HCT116 (cell line): ENCODE measurements at regions of chr9 and their contacts with region 1.

Region 1: DNA sequence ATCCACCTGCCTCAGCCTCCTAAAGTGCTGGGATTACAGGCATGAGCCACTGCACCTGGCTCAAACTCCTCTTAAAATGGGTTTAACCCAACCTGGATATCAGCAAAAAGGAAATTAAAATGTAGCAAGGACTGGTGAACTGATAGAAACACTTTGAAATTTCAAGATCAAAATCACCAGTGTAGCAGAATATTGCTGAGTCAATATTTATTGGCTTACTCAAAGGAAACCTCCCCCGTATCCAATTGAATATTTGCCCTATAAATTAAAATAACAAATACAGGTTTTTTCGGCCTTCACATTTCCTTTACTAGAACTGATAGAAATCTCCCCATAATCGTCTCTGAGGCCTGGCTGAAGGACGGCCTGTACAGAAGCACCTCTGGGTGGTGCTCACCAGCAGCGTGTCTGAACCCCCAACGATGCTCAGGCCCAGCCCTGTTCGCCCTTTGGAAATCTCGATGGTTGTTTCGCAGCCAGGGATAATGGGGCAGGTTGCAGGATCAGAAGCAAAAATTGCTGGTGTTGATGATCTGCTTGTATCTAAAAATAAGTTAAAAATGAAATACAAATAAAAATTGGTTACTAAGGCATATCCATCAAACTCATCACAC is 156.6 kb downstream of the MPDZ start:
- DNase-seq: no peak
- ATAC-seq: no peak
- H3K4me3 ChIP-seq: no peak overlapping the region
- H3K27ac ChIP-seq: no peak overlapping the region
- H3K4me1 ChIP-seq: no peaks in the 10 kb centered on the region
- H3K27me3 ChIP-seq: no peaks in the 10 kb centered on the region
- CTCF ChIP-seq: no peak
- POLR2A ChIP-seq: no peak
- RAD21 ChIP-seq: no peak

Region 2: GRCh38 chr9:12775679-12776512 is 347.0 kb before region 1 on chr9:
- CTCF ChIA-PET with region 1: no interaction called
- POLR2A ChIA-PET with region 1: no interaction called
- RAD21 ChIA-PET with region 1: no interaction called
- intact Hi-C with region 1: no loop called
- DNase-seq: peak; percentile 57
- ATAC-seq: peak; percentile 90
- H3K4me3 ChIP-seq: peak overlapping the region; percentile 75 to 82
- H3K27ac ChIP-seq: peak overlapping the region; percentile 66
- H3K4me1 ChIP-seq: peaks cover 0 to 22% of the 10 kb centered on the region in 2 experiments; a peak in 2 of 4 replicates
- H3K27me3 ChIP-seq: no peaks in the 10 kb centered on the region
- CTCF ChIP-seq: peak; percentile 23 to 45 (median 28); a peak in 4 of 6 replicates
- POLR2A ChIP-seq: no peak
- RAD21 ChIP-seq: peak; percentile 56

Region 3: DNA sequence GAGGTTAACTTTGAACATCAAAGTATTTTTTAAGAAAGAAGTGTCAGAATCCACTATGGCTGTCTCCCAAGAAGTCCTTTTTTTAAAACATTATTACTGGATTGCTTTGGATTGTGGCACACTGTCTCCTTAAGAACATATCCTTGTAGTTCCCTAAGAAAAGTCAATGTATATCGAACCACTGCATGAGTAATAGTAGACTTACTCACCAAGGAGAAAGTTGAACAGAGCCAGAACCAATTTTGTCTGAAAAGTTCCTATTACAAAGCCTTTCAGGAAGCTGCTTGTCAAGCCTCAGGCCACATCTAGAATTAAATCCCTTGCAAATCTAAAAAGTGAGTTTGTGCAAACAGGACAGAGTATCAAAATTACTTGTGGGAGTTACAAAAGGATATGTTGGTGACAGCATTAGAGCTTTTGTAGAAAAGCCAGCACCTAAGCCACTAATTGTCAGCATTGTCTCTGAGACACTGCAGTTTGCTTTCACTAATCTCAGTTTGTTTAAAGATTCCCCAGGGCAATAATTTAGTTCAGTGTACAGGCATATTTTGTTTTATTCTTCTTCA is 38.8 kb before region 1 on chr9:
- CTCF ChIA-PET with region 1: no interaction called
- POLR2A ChIA-PET with region 1: no interaction called
- RAD21 ChIA-PET with region 1: no interaction called
- intact Hi-C with region 1: no loop called
- DNase-seq: no peak
- ATAC-seq: no peak
- H3K4me3 ChIP-seq: no peak overlapping the region
- H3K27ac ChIP-seq: no peak overlapping the region
- H3K4me1 ChIP-seq: no peaks in the 10 kb centered on the region
- H3K27me3 ChIP-seq: no peaks in the 10 kb centered on the region
- CTCF ChIP-seq: no peak
- POLR2A ChIP-seq: no peak
- RAD21 ChIP-seq: no peak

Region 4: DNA sequence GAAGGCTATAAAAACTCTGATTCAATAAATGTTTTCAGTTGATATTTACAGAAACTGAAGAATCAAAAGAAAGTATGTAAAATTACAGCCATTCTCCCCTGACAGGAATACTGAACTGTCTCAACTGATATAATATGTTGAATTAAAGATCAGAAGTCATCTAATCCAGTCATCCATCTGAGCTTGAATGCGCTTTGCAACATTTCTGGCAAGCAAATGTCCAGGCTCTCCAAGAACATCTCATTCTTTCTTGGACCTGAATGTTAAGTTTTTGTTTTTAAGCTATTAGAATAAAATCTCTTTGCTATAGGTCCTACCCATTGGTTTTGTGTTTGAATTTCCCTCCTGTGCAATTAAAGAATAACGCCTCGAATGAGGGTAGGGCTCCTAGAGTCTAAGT is 36.1 kb after region 1 on chr9:
- CTCF ChIA-PET with region 1: no interaction called
- POLR2A ChIA-PET with region 1: no interaction called
- RAD21 ChIA-PET with region 1: no interaction called
- intact Hi-C with region 1: loop called (anchors 5 kb)
- DNase-seq: no peak
- ATAC-seq: no peak
- H3K4me3 ChIP-seq: no peak overlapping the region
- H3K27ac ChIP-seq: no peak overlapping the region
- H3K4me1 ChIP-seq: no peaks in the 10 kb centered on the region
- H3K27me3 ChIP-seq: no peaks in the 10 kb centered on the region
- CTCF ChIP-seq: no peak
- POLR2A ChIP-seq: no peak
- RAD21 ChIP-seq: no peak

Region 5: GRCh38 chr9:13171261-13171660 is 48.4 kb after region 1 on chr9:
- CTCF ChIA-PET with region 1: no interaction called
- POLR2A ChIA-PET with region 1: no interaction called
- RAD21 ChIA-PET with region 1: no interaction called
- intact Hi-C with region 1: loop called (anchors 5 kb)
- DNase-seq: no peak
- ATAC-seq: no peak
- H3K4me3 ChIP-seq: no peak overlapping the region
- H3K27ac ChIP-seq: no peak overlapping the region
- H3K4me1 ChIP-seq: no peaks in the 10 kb centered on the region
- H3K27me3 ChIP-seq: peaks cover 13% of the 10 kb centered on the region
- CTCF ChIP-seq: no peak
- POLR2A ChIP-seq: no peak
- RAD21 ChIP-seq: no peak

Region 6: DNA sequence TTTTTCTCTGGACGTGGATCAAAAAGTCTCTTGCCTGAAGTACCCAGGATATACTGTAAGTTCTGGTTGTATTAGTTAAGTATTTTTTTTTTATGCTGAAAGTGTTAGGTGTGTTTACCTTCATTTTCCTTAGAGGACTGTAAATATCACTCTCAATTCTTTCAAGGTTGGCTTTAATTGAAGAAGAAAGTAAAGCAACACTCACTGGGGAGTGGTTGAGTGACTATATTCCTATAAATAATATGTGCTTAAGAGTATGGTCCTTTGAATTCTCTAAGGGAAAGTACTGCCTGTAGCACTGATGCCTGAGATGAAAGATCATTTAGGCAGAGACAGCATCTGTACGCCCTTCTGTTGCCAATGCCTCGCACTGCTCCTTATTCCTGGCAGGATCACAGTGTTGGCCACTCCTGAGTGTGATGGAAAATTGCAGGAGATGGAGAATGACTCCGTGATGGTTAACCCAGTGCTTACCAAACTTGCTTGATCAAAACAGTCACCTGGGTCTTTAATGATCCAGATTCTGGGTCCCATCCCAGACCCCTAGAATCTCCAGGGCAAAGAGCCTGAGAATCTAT is 338.6 kb after region 1 on chr9:
- CTCF ChIA-PET with region 1: no interaction called
- POLR2A ChIA-PET with region 1: no interaction called
- RAD21 ChIA-PET with region 1: no interaction called
- intact Hi-C with region 1: no loop called
- DNase-seq: no peak
- ATAC-seq: no peak
- H3K4me3 ChIP-seq: no peak overlapping the region
- H3K27ac ChIP-seq: no peak overlapping the region
- H3K4me1 ChIP-seq: no peaks in the 10 kb centered on the region
- H3K27me3 ChIP-seq: no peaks in the 10 kb centered on the region
- CTCF ChIP-seq: no peak
- POLR2A ChIP-seq: no peak
- RAD21 ChIP-seq: no peak